ENCODE measurements at regions of chr21 and their contacts with region 1.

Region 1: GRCh38 chr21:15592271-15592860 is 137.4 kb upstream of the USP25 start:
- DNase-seq: no peak
- H3K4me3 ChIP-seq: no peak overlapping the region
- H3K27ac ChIP-seq: no peak overlapping the region
- H3K4me1 ChIP-seq: no peaks in the 10 kb centered on the region
- H3K27me3 ChIP-seq: peaks cover 4% of the 10 kb centered on the region
- CTCF ChIP-seq: peak; percentile 66

Region 2: DNA sequence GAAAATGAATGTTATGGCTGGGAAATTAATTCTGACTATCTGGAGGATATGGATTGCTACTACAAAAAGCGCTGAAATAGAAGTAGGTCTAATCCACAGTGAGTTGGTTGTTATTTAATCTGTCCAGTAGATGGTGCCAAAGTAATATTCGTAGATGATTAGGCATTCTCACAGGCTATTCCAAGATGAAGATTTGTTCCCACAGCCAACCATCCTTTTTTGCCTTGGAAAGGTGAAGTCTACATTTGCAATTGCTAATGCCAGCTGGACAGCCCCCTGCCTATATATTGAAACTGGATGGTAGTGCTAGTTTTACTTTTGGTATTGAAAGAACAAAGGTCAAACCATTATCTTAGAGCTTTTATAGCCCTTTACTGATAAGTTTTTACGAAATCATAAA is 1332.6 kb before region 1 on chr21:
- intact Hi-C with region 1: loop called (anchors 10 kb)
- DNase-seq: no peak
- H3K4me3 ChIP-seq: no peak overlapping the region
- H3K27ac ChIP-seq: no peak overlapping the region
- H3K4me1 ChIP-seq: no peaks in the 10 kb centered on the region
- H3K27me3 ChIP-seq: peaks cover 8% of the 10 kb centered on the region
- CTCF ChIP-seq: peak; percentile 68

Region 3: DNA sequence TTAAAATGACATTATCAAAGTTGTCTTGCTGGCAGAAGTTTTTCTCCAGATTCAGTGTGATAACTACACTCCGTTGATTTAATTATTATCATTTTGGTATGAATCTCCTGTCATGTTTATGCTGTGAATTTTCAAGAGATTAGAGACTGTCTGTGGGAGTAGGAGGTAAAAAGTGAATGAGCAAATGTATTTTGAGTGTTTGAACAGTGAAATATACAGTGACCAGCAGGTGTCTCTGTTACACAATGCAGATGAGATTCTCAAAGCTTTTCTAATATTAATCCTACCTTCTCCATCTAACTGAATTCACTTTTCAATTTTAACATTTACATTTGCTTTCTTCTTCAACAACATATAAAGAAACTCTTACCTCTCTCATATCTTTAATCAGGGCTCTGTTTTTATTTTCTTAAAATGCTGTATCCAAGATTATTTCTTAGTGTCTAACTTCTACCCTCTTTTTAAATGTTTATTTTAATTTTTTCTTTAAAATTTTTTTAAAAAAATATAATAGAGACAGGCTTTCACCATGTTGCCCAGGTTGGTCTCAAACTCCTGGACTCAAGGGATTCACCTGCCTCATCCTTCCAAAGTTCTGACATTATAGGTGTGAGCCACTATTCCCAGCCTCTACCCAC is 1188.6 kb before region 1 on chr21:
- intact Hi-C with region 1: loop called (anchors 10 kb)
- DNase-seq: no peak
- H3K4me3 ChIP-seq: no peak overlapping the region
- H3K27ac ChIP-seq: no peak overlapping the region
- H3K4me1 ChIP-seq: no peaks in the 10 kb centered on the region
- H3K27me3 ChIP-seq: no peaks in the 10 kb centered on the region
- CTCF ChIP-seq: peak; percentile 68

Measured in left ventricle myocardium inferior (tissue), 1 donor.